Cardiac septum (tissue), 1 donor: ENCODE measurements at regions of chr15 and their contacts with region 1.

Region 1: DNA sequence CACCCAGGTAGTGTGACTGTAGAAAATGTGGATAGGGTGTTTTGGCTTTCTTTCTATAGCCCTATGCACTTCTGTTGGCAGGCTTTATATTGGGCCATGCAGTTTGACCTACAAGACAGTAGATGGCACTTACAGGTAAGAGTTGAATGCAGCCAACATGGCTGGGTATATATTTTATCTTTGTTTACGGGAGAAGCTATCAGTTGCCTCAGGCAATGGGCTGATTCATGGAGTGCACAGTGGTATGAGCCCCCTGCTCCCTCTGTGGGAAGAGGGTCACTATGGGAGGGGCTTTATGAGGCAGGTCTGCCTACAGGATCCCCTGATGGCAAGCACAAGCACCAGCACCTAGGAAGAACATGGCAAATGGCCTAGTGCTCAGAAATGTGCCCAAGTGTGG is 301.2 kb upstream of the CDIN1 start:
- DNase-seq: no peak

Region 2: DNA sequence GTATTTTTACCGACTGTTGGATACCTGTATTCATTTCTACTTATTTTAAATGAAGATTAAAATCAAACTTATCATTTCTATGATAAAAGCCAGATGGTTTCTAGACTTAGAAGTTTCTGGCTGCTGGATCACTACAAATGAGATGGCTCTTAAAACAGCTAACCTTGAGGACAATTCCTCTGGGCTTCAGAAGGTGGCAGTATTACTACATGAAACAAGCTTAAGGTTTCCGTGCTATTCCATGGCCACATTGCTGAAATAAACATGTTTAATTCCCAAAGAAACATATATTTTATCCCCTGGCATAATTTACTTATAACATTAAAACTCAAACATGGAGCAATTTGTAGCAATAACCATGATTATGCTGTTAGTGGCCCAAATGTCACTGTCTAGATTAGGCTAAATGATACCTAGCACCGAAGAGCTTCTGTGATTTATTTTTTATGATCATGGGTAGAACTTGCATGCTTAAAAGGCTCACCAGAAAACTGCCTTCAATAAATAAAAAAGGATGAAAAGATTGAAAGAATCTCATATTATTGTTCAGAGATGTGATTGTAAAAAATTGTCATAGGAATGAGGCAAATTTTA is 989.1 kb before region 1 on chr15:
- intact Hi-C with region 1: loop called (anchors 10 kb)
- DNase-seq: no peak